ENCODE measurements at regions of chr19 and their contacts with region 1.

Region 1: DNA sequence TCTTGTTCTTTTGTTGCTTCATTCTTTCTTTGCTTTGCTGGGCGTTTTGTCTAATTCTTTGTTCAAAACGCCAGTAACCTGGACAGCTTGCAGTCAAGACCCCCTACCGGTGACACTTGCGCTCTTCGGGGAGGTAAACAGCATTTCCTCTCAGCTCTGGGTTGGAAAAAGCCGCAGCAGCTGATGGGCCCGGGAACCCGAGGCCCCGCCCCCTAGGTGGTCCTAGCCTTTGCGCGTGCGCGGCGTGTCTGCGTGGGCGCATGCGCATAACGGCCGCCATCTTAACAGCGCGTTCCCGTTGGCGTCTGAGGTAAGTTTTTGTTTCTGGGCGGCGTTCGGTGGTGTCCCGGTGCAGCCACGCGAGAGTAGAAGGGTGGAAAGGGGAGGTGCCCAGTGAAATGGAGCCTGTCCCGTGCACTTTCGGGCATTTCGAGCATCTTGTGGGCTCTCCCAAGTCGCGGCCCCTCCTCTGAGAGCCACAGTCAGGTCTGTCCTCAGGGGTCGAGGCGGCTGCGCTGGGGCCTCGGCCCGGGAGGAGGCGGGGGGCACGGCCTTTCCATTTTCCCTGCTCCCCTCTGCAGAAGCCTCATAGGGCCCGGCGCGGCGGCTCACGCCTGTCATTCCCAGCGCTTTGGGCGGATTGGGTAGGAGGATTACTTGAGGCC is at the start of gene ZNF559:
- DNase-seq: peak; percentile 92 to 97
- H3K4me3 ChIP-seq: peak within 1 kb of the TSS; percentile 57 to 63
- H3K27ac ChIP-seq: peak within 1 kb of the TSS; percentile 76 to 84
- H3K4me1 ChIP-seq: peaks cover 0 to 17% (median 6%) of the 10 kb centered on the region in 4 donors
- H3K27me3 ChIP-seq: no peaks in the 10 kb centered on the region
- CTCF ChIP-seq: peak in 1 of 2 experiments; percentile 25

Region 2: DNA sequence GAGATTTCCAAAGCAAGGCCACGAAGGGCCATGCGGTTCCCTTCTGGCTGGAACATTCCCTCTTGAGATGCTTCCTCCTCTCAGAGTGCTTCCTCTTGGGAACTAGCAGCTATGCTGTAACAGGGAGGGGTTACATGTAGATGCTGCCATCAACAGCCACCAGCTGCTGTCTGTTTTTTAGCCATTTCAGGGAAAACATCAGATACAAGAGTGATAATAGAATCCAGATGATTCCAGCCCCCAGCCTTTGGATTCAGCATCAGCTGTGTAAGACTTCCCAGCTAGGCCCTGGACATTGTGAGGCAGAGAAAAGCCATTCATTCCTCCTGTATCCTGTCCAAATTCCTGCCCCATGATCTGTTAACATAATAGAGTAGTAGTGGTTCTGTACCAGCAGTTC is 30.6 kb after region 1 on chr19:
- intact Hi-C with region 1: no loop called
- DNase-seq: no peak
- H3K4me3 ChIP-seq: no peak overlapping the region
- H3K27ac ChIP-seq: no peak overlapping the region
- H3K4me1 ChIP-seq: no peaks in the 10 kb centered on the region
- H3K27me3 ChIP-seq: no peaks in the 10 kb centered on the region
- CTCF ChIP-seq: no peak

Region 3: DNA sequence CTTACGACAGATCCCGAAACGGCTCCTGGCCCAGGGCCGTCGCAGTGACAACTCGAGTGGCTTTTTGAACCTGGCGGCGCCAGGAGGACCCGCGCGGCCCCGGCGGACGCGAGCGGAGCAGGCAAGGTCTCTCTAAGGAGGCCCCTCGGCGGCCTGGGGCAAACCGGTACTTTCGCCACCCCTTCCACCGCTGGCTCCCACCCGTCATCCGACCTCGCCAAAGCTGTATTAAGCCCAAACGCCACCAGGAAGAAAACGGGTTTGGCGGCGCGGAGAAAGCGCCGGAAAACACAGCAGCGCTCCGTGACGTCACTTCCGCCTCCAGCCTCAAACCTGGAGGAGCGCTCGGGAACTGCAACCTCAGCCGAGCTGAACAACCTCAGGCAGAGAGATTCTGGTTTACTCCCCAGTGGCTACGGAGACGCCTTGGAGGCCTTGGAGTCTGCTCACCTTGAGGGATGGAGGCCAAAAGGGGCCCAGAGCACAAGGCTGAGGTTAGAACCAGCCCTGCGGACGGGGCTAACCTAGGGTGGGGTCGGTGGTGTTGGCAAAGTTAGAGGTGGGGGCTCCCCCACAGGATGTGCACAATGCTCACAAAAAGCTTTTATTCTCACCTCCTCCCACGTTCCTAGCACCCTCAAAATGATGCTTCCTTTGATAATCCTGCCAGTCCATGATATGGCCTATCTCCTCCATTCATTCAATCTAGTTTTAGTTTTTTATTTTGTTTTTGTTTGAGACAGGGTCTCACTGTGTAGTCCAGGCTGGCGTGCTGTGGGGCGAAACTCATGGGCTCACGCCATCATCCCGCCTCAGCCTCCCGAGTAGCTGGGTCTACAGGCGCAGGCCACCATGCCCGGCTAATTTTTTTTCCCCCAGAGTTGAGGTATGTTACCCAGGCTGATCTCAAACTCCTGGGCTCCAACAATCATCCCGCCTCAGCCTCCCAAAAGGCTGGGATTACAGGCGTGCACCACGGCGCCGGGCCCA is 111.5 kb after region 1 on chr19 and contains the start of gene ZNF266:
- intact Hi-C with region 1: loop called (anchors 5 kb)
- DNase-seq: peak; percentile 87 to 91
- H3K4me3 ChIP-seq: peak within 1 kb of the TSS; percentile 85 to 91
- H3K27ac ChIP-seq: peak within 1 kb of the TSS; percentile 89 to 92
- H3K4me1 ChIP-seq: peaks cover 0 to 23% (median 18%) of the 10 kb centered on the region in 4 donors
- H3K27me3 ChIP-seq: no peaks in the 10 kb centered on the region
- CTCF ChIP-seq: peak; percentile 82 to 87